ENCODE measurements at regions of chr1 and their contacts with region 1.

Region 1: DNA sequence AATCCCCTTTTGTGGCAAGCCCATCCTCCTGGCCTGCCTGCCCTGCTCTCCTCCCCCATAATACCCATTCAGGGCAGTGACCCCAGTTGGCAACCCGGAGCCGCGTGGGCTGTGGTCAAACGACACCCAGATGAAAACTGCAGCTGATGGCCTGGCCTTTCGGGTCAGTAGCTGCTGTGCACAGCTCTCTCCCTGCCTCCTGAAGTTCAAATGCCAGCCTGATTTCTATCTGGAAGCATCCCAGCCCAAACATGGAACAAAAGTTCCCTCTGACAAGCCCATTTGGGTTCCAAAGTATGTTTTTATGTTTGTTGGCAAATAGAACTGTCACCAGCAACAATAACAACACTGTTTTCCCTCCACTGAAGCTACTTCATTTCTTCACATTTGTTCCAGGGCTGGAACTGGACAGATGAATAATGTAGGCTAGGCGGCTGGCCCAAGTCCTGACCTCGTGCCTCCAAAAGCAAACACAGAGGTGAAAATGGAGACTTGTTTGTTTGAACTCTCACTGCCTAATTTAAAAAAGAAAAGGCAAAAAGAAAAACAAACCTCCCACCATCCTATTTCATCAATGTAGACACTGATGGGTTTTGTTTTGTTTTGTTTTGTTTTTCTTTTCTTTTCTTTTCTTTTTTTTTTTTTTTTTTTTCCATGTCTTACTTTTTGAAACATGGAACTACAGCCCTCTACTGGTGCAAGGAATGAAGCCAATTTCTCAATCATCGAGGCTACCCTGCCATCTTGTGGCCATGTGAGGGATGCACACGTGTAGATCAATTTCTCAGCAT is 179.0 kb downstream of the ADSS2 start:
- DNase-seq: peak; percentile 89
- ATAC-seq: peak; percentile 76
- H3K4me3 ChIP-seq: no peak overlapping the region
- H3K27ac ChIP-seq: no peak overlapping the region
- H3K4me1 ChIP-seq: no peaks in the 10 kb centered on the region
- H3K27me3 ChIP-seq: no peaks in the 10 kb centered on the region
- CTCF ChIP-seq: peak; percentile 91

Region 2: DNA sequence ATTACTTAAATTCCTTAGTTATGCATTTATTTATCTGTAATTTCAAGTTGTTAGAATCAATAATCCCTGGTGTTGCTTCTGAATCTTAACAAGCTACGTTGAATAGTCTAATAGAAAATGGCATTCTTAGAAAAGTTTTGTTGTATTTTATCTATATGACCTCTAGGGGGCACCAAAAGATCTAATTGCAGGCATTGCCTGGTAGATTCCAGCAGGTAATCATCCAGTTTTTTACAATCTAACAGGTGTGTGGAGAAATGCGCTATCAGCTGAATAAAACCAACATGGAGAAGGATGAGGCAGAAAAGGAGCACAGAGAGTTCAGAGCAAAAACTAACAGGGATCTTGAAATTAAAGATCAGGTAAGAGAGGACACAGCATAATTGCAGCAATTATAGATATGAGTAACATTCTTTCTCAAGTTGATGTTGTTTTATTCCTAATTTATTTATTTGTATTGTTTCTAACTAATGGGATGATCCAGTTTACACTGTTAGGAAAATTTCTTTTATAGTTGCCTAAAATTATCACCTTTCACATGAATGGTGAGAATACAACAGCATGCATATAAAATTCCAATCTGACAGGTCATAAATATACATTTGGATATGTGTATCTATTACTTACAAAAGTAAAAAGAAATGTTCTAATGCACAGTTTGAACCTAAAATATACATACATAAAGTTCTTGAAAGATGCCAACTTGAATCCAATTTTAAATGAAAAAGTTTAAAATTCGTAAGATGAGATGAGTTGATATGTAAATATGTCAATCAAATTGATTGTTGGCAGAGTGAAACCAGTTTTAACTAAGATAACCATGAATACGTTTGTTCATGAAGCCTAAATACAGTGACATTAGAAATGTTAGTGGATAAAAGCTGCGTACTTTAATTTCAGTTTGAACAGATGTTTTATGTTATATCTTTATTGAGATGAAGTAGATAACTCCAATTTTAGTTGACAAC is 928.4 kb before region 1 on chr1:
- CTCF ChIA-PET with region 1: no interaction called
- POLR2A ChIA-PET with region 1: no interaction called
- in situ Hi-C with region 1: no loop called
- intact Hi-C with region 1: loop called (anchors 2 kb)
- DNase-seq: peak; percentile 27
- ATAC-seq: no peak
- H3K4me3 ChIP-seq: no peak overlapping the region
- H3K27ac ChIP-seq: no peak overlapping the region
- H3K4me1 ChIP-seq: no peaks in the 10 kb centered on the region
- H3K27me3 ChIP-seq: no peaks in the 10 kb centered on the region
- CTCF ChIP-seq: peak; percentile 73; the same call in 1 of the 2 replicates

Region 3: DNA sequence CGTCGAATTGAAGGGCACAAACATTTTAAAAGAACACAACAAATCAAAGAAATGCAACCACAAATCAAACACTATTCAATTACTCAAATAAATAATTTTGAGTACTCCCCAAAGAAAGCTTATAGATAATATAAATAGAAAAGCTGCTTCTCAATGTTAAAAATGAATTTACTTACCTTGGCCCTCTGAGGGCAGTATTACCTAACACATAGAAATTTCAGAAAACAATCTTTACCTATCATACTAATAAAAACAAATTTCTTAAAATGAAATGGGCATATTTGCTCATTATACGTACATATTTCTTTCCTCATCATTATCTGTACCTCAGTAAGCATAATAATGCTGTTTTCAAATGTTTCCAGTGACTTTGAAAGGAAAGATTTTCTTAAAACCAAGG is 564.5 kb before region 1 on chr1:
- CTCF ChIA-PET with region 1: no interaction called
- POLR2A ChIA-PET with region 1: no interaction called
- in situ Hi-C with region 1: no loop called
- intact Hi-C with region 1: loop called (anchors 2 kb)
- DNase-seq: no peak
- ATAC-seq: no peak
- H3K4me3 ChIP-seq: no peak overlapping the region
- H3K27ac ChIP-seq: no peak overlapping the region
- H3K4me1 ChIP-seq: no peaks in the 10 kb centered on the region
- H3K27me3 ChIP-seq: no peaks in the 10 kb centered on the region
- CTCF ChIP-seq: peak; percentile 17; the same call in 1 of the 2 replicates

Region 4: DNA sequence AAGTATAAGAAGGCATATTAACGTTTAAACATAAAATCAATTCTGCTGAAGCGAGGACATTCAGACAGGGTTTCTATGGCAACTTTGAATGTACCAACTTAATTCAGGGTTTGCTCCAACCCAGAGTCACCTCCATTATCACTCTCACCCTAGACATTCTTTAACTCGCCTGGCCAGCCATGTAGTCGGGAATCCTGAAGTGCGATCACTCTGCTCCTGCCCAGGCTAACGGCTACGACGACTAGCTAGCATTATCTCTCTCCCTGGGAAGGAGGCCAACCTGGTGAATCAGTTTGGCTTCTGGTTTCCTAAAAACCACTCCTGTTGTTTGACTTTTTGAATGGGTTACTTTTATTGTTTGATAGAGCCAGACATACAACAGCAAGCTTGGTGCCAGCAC is 260.5 kb before region 1 on chr1:
- CTCF ChIA-PET with region 1: interaction called, 3 read pairs
- POLR2A ChIA-PET with region 1: no interaction called
- in situ Hi-C with region 1: no loop called
- intact Hi-C with region 1: loop called (anchors 2 kb)
- DNase-seq: no peak
- ATAC-seq: no peak
- H3K4me3 ChIP-seq: no peak overlapping the region
- H3K27ac ChIP-seq: no peak overlapping the region
- H3K4me1 ChIP-seq: no peaks in the 10 kb centered on the region
- H3K27me3 ChIP-seq: peaks cover 4% of the 10 kb centered on the region; the same call in 1 of the 2 replicates
- CTCF ChIP-seq: no peak

Region 5: GRCh38 chr1:244341455-244342450 is 69.1 kb after region 1 on chr1:
- CTCF ChIA-PET with region 1: no interaction called
- POLR2A ChIA-PET with region 1: no interaction called
- in situ Hi-C with region 1: no loop called
- intact Hi-C with region 1: no loop called
- DNase-seq: no peak
- ATAC-seq: peak; percentile 68; the same call in 1 of the 2 replicates
- H3K4me3 ChIP-seq: no peak overlapping the region
- H3K27ac ChIP-seq: no peak overlapping the region; the same call in 1 of the 2 replicates
- H3K4me1 ChIP-seq: 0 out of 2 replicates have a peak, but pooled peaks cover 3% of the 10 kb centered on the region
- H3K27me3 ChIP-seq: no peaks in the 10 kb centered on the region
- CTCF ChIP-seq: no peak

Region 6: DNA sequence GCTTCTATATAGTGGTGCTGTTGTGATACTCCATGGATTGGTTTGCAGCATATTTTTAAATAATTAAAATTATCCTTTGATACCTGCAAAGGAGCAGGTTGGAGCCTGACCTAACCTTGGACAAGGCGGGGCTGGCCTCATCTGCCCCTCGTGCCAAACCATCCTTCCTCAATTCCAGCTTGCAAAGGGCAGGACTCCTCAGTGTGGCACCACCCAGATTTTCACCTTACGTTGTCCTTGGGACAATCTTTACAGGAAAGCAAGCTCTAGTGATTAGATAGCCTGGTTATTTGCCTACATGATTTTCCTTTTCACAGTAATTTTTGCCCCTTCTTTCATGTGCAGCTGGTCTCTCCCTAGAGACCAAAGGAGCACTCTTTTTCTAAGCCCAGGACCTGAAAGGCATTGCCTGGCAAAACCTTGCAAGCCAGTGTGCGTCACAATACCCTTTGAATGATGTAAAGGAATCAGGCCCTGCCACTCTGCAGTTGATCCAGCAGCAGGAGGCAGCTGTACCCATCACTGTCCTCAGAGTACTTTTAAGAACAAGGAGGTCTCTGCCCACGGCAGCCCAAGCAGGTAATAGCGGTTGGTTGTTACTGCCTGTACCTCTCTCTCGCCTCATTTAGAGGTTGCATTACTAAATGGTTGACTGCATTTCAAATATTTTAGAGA is 79.6 kb after region 1 on chr1:
- CTCF ChIA-PET with region 1: no interaction called
- POLR2A ChIA-PET with region 1: no interaction called
- in situ Hi-C with region 1: no loop called
- intact Hi-C with region 1: no loop called
- DNase-seq: no peak
- ATAC-seq: no peak
- H3K4me3 ChIP-seq: no peak overlapping the region
- H3K27ac ChIP-seq: no peak overlapping the region
- H3K4me1 ChIP-seq: no peaks in the 10 kb centered on the region
- H3K27me3 ChIP-seq: no peaks in the 10 kb centered on the region
- CTCF ChIP-seq: no peak

Region 7: DNA sequence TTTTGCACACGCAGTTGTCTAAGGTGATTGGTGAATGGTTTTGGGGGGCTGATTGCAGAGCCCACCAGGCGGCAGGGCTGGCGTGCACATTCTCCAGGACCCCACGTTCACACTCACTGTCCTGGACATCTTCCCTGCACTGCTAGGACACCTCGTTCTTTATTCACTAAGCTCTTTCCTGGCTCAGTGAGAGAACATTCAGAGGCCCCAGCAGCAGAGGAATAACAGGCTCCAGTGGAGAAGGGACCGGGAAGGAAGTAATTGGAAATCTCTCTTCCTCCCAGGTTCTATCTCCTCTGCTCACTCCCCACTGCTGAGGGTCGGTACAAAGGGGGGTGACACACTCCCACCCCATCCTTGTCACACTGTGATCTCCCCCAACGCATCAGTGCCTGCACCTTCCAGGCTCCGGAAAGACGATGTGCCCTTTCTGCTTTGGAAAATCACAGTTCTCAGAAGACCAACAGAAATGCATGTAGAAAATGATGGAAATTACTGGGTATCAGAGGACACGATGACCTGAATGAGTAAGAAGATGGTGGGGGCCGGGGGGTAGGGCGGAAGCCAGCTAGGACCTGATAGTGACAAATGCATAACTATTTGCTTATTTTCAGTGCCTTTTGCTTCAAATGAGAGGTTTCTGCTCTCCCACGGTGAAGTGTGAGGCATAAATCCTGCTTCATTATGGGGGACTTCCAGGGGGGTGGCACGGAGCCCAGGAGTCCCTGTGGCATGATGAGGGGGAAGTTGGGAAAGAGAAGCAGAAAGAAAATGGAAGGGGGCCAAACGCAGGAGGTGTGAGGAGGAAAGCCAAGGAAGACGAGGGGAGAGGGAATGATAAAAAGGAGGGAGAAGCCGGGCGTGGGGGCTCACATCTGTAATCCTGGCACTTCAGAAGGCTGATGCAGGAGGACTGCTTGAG is 856.9 kb after region 1 on chr1:
- CTCF ChIA-PET with region 1: no interaction called
- POLR2A ChIA-PET with region 1: no interaction called
- in situ Hi-C with region 1: no loop called
- intact Hi-C with region 1: no loop called
- DNase-seq: no peak
- ATAC-seq: no peak
- H3K4me3 ChIP-seq: no peak overlapping the region
- H3K27ac ChIP-seq: no peak overlapping the region
- H3K4me1 ChIP-seq: no peaks in the 10 kb centered on the region; the same call in 1 of the 2 replicates
- H3K27me3 ChIP-seq: no peaks in the 10 kb centered on the region; the same call in 1 of the 2 replicates
- CTCF ChIP-seq: no peak

Measured in Panc1 (cell line).